Lower lobe of right lung (tissue), 2 donors: ENCODE measurements at regions of chr7 and their contacts with region 1.

Region 1: DNA sequence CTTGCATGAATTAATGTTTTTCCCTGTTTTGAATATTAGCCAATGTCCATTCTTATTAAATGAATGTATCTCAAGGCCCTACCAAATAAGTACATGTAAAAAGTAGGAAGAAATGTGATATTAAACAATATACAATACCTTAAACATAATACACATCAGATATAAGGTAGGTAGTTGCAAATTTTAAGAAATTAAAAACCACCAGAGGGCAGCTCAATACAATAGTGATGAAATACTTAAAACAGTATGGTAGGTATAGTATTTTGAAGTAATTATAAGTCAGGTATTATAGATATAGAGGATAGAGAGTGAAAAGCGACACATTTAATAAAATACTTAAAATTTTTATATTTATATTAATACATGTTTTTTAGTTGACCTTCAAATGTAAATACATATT is 43.6 kb upstream of the CDK14 start:
- DNase-seq: no peak
- ATAC-seq: no peak
- H3K4me3 ChIP-seq: no peak overlapping the region
- H3K27ac ChIP-seq: no peak overlapping the region
- H3K4me1 ChIP-seq: no peaks in the 10 kb centered on the region
- H3K27me3 ChIP-seq: no peaks in the 10 kb centered on the region
- CTCF ChIP-seq: peak; percentile 38

Region 2: DNA sequence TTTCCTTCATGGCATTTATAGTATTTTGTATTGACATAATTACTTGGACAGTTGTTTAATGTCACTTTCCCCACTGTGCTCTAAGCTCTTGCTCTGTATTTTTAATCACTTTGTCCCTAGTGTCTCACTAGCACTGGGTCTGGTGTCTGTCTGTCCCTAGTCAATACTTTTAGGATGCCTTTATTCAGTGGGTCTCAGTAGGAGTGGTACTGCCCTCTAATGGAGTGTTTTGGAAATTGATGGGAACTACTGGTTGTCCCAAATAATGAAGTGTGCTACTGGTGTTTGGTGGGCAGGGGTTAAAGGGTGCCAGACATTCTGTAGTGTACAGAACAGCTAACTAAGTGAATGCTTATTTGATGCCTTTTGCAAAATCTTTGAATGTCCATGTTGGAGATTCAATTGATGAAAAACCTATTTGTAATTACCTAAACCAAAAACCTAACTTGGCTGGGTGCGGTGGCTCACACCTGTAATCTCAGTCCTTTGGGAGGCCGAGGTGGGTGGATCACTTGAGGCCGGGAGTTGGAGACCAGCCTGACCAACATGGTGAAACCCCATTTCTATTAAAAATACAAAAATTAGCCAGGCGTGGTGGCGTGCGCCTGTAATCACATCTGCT is 76.9 kb after region 1 on chr7:
- intact Hi-C with region 1: loop called (anchors 5 kb)
- DNase-seq: no peak
- ATAC-seq: peak; percentile 82 to 87
- H3K4me3 ChIP-seq: no peak overlapping the region
- H3K27ac ChIP-seq: no peak overlapping the region
- H3K4me1 ChIP-seq: peaks cover 23% of the 10 kb centered on the region
- H3K27me3 ChIP-seq: no peaks in the 10 kb centered on the region
- CTCF ChIP-seq: peak; percentile 71

Region 3: GRCh38 chr7:90690159-90690858 is 137.8 kb after region 1 on chr7:
- intact Hi-C with region 1: no loop called
- DNase-seq: no peak
- ATAC-seq: no peak
- H3K4me3 ChIP-seq: no peak overlapping the region
- H3K27ac ChIP-seq: no peak overlapping the region
- H3K4me1 ChIP-seq: no peaks in the 10 kb centered on the region
- H3K27me3 ChIP-seq: no peaks in the 10 kb centered on the region
- CTCF ChIP-seq: no peak